ENCODE measurements at regions of chr7 and their contacts with region 1.

Region 1: DNA sequence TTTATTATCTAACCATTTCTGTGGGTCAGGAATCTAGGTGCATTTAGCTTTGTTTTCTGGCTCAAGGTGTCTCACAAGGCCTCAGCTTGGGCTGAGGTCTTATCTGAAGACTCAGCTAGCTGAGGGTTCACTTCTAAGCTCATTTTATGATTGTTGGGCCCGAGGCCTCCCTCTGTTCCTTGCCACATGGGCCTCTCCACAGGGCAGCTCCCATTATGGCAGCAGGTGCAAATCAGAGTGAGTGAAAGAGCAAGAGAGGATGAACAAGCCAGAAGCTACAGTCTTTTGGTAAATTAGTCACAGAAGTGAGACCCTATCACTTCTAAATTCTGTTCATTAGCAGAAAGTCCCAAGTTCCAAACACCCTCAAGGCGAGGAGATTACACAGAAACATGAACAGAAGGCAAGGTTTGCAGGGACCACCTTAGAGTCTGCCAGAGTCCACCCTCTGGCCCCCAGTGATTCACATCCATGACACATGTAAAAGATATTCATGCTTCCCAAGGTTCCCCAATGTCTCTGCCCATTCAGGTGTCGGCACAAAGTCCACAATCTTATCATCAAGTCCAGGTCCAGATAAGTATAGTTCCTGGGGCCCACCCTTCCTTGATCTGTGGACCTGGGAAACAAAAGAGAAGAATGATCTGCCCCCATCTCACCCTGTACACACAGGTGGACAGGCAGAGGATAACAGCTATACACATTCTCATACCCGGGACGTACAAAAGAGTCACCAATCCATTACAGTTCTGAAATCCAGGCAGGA is 23.7 kb downstream of the FIGNL1 start:
- DNase-seq: no peak
- H3K4me3 ChIP-seq: no peak overlapping the region
- H3K27ac ChIP-seq: no peak overlapping the region
- H3K4me1 ChIP-seq: no peaks in the 10 kb centered on the region
- H3K27me3 ChIP-seq: no peaks in the 10 kb centered on the region
- CTCF ChIP-seq: no peak
- EP300 ChIP-seq: no peak
- POLR2A ChIP-seq: no peak

Region 2: GRCh38 chr7:48658138-48658537 is 1768.3 kb before region 1 on chr7:
- intact Hi-C with region 1: loop called in 1 of 4 experiments (anchors 5 kb)
- DNase-seq: no peak
- H3K4me3 ChIP-seq: no peak overlapping the region
- H3K27ac ChIP-seq: no peak overlapping the region
- H3K4me1 ChIP-seq: no peaks in the 10 kb centered on the region
- H3K27me3 ChIP-seq: no peaks in the 10 kb centered on the region
- CTCF ChIP-seq: no peak
- EP300 ChIP-seq: no peak
- POLR2A ChIP-seq: no peak

Measured in ovary (tissue), 10 donors.